Colonic mucosa (tissue), 4 donors: ENCODE measurements at regions of chr12 and their contacts with region 1.

Region 1: DNA sequence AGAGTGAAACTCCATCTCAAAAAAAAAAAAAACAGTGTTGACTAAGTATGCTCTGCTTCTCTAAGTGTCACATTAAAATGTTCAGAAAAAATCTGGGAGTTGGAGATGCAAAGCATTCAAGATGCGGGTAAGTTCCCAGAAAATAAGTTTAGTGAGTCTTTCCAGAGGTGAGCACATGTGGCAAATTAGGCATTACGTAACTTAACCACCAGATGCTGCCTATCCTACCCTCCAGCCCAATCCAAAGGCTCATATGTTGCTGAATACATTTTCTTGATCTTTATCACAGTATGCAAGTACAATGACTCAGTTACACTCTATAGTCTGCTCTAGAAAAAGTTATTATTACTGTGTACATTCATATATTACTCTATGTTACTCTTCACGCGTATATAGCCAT is 3.6 kb downstream of the SLC2A14 start:
- DNase-seq: no peak
- H3K4me3 ChIP-seq: no peak overlapping the region
- H3K27ac ChIP-seq: no peak overlapping the region
- H3K4me1 ChIP-seq: no peaks in the 10 kb centered on the region
- H3K27me3 ChIP-seq: peaks cover 7% of the 10 kb centered on the region
- CTCF ChIP-seq: no peak

Region 2: DNA sequence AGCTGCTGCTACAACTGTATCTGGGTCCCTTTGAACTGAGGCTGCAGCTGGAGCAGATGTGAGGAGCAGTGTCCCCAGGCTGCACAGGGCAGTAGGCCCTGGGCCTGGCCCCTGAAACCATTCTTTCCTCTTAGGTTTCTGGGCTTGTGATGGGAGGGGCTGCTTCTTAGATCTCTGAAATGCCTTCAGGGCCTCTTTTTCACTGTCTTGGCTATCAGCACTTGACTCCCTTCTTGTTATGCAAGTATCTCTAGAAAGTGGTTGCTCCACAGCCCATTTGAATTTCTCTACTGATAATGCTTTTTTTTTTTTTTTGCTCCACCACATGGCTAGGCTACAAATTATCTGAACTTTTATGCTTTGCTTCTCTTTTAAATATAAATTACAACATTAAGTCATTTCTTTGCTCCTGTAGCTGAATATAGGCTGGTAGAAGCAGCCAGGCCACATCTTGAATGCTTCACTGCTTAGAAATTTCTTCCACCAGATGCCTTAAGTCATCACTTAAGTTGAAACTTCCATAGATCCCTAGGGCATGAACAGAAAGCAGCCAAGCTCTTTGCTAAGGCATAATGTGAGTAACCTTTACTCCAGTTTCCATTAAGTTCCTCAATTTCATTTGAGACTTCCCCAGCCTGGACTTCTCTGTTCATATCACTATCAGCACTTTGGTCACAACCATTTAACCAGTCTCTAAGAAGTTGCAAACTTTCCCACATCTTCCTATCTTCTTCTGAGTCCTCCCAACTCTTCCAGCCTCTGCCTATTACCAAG is 524.1 kb before region 1 on chr12:
- intact Hi-C with region 1: no loop called
- DNase-seq: no peak
- H3K4me3 ChIP-seq: no peak overlapping the region
- H3K27ac ChIP-seq: no peak overlapping the region
- H3K4me1 ChIP-seq: no peaks in the 10 kb centered on the region
- H3K27me3 ChIP-seq: no peaks in the 10 kb centered on the region
- CTCF ChIP-seq: no peak

Region 3: DNA sequence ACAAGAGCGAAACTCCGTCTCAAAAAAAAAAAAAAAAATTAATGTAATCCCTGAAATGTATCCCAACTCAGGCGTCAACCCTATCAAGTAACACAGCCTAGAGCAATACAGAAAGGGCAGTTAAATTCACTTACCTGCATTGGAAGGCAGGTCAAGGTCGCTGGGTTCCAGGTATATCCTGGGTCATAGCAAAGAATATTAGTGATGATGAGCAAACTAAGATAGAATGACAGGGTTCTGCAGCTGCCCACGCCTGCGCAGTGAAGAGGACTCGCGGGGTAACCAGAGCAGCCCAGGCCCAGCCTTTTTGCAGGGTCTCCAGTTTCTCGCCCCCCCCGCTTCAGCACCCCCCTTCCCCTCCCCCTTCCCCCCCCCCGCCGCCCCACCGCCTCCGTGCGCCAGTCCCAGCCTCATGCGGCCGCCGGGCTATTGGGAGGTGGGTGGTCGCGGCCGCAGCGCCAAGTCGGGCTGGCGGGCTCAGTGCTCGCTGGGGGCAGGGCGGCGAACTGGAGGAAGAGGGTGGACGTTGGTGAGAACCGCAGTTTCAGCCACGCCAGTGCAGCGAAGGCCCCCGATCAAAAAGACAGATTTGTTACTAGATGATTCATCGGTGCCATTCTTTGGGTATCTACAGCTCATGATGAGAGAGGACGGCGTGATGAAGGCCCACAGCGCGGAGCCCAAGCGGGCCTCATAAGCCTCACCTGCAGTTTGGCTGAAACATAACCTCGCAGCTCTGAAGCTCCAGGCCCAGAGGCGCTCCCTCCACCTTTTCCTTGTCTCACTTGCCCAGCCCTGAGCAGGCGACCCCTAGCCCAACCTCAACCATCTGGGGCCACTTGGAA is 46.7 kb after region 1 on chr12:
- intact Hi-C with region 1: loop called (anchors 10 kb)
- DNase-seq: no peak
- H3K4me3 ChIP-seq: no peak overlapping the region
- H3K27ac ChIP-seq: no peak overlapping the region
- H3K4me1 ChIP-seq: no peaks in the 10 kb centered on the region
- H3K27me3 ChIP-seq: no peaks in the 10 kb centered on the region
- CTCF ChIP-seq: no peak